ENCODE measurements at regions of chr7 and their contacts with region 1.

Region 1: DNA sequence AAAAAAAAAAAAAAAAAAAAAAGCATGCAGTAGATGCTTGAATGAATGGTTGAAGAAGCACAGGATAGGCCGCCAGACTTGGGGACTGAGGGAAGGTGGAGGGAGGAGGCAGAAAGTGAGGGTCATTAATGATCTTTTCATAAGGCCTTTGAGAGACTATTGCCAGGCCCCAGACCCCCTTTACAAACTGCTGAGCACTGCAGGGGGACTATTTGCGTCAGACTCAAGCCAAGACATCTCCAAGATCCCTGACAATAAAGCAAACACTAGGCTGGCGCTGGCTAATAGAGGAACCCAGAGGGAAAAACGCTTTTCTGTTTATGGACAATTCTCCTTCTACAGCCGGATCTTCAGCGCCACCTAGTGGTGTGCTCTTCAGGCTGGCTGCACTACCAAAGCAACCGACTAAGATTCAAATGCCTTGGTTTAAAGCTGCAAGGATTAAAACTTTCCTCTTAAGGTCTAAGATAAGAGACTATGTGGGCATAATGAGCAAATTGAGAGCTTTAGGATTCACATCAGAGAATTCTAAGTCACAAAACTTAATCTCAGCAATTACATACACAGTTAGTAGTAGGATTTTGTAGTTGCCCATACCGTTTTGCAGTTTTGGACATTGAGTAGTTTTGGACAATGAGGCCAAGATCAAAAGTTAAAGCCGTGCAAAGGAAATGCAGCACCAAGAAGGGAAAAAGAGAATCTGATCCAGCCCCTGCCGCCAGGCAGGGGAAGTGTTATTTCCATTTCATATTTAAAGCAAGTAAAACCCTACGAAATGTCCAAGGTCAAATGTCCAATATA is 17.9 kb upstream of the AGK start:
- DNase-seq: peak; percentile 47
- ATAC-seq: peak; percentile 86
- H3K4me3 ChIP-seq: no peak overlapping the region
- H3K27ac ChIP-seq: no peak overlapping the region
- H3K4me1 ChIP-seq: no peaks in the 10 kb centered on the region
- H3K27me3 ChIP-seq: peaks cover 0 to 5% of the 10 kb centered on the region in 2 experiments; a peak in 2 of 5 replicates
- CTCF ChIP-seq: peak; percentile 85
- EP300 ChIP-seq: no peak
- POLR2A ChIP-seq: no peak
- RAD21 ChIP-seq: peak; percentile 75

Region 2: GRCh38 chr7:140810830-140811556 is 722.4 kb before region 1 on chr7:
- CTCF ChIA-PET with region 1: no interaction called
- POLR2A ChIA-PET with region 1: no interaction called
- in situ Hi-C with region 1: no loop called
- intact Hi-C with region 1: loop called (anchors 5 kb)
- DNase-seq: peak; percentile 76
- ATAC-seq: peak; percentile 99
- H3K4me3 ChIP-seq: no peak overlapping the region
- H3K27ac ChIP-seq: no peak overlapping the region
- H3K4me1 ChIP-seq: peaks cover 12% of the 10 kb centered on the region
- H3K27me3 ChIP-seq: no peaks in the 10 kb centered on the region
- CTCF ChIP-seq: peak; percentile 91
- EP300 ChIP-seq: no peak
- POLR2A ChIP-seq: no peak
- RAD21 ChIP-seq: peak; percentile 78

Region 3: GRCh38 chr7:141027043-141027442 is 506.3 kb before region 1 on chr7:
- CTCF ChIA-PET with region 1: interaction called, 3 read pairs
- POLR2A ChIA-PET with region 1: no interaction called
- in situ Hi-C with region 1: no loop called
- intact Hi-C with region 1: loop called (anchors 1 kb)
- DNase-seq: no peak
- ATAC-seq: peak; percentile 67
- H3K4me3 ChIP-seq: no peak overlapping the region
- H3K27ac ChIP-seq: no peak overlapping the region
- H3K4me1 ChIP-seq: no peaks in the 10 kb centered on the region
- H3K27me3 ChIP-seq: no peaks in the 10 kb centered on the region
- CTCF ChIP-seq: peak; percentile 37
- EP300 ChIP-seq: no peak
- POLR2A ChIP-seq: no peak
- RAD21 ChIP-seq: no peak

Region 4: GRCh38 chr7:141072548-141073172 is 460.7 kb before region 1 on chr7:
- CTCF ChIA-PET with region 1: no interaction called
- POLR2A ChIA-PET with region 1: no interaction called
- in situ Hi-C with region 1: loop called (anchors 25 kb)
- intact Hi-C with region 1: loop called (anchors 5 kb)
- DNase-seq: no peak
- ATAC-seq: peak; percentile 63
- H3K4me3 ChIP-seq: peak overlapping the region in 2 of 3 experiments; percentile 9 to 57; a peak in 3 of 6 replicates
- H3K27ac ChIP-seq: no peak overlapping the region
- H3K4me1 ChIP-seq: peaks cover 15% of the 10 kb centered on the region; the same call in 1 of the 2 replicates
- H3K27me3 ChIP-seq: peaks cover 9 to 64% of the 10 kb centered on the region in 2 experiments; a peak in 4 of 5 replicates
- CTCF ChIP-seq: no peak
- EP300 ChIP-seq: no peak
- POLR2A ChIP-seq: no peak
- RAD21 ChIP-seq: no peak

Region 5: GRCh38 chr7:141251957-141252356 is 281.4 kb before region 1 on chr7:
- CTCF ChIA-PET with region 1: no interaction called
- POLR2A ChIA-PET with region 1: no interaction called
- in situ Hi-C with region 1: no loop called
- intact Hi-C with region 1: loop called (anchors 5 kb)
- DNase-seq: no peak
- ATAC-seq: peak; percentile 59
- H3K4me3 ChIP-seq: no peak overlapping the region
- H3K27ac ChIP-seq: no peak overlapping the region
- H3K4me1 ChIP-seq: no peaks in the 10 kb centered on the region
- H3K27me3 ChIP-seq: no peaks in the 10 kb centered on the region
- CTCF ChIP-seq: peak; percentile 29
- EP300 ChIP-seq: no peak
- POLR2A ChIP-seq: no peak
- RAD21 ChIP-seq: no peak

Measured in HepG2 (cell line).